Motor neuron (in vitro differentiated cells): ENCODE measurements at regions of chr9 and their contacts with region 1.

Region 1: GRCh38 chr9:130053504-130054324 is at the start of gene GPR107:
- ATAC-seq: peak; percentile 92 to 97 (median 94)
- H3K4me3 ChIP-seq: peak within 1 kb of the TSS; percentile 79 to 95 (median 94)
- H3K27ac ChIP-seq: peak within 1 kb of the TSS; percentile 98 to 99
- H3K4me1 ChIP-seq: peaks cover 17 to 26% of the 10 kb centered on the region in 2 donors
- total RNA-seq, gene GPR107: 27.6 to 58.5 (median 39.7) TPM

Region 2: GRCh38 chr9:129884220-129885017 is 169.3 kb before region 1 on chr9:
- in situ Hi-C with region 1: loop called in 1 of 9 experiments (anchors 25 kb)
- ATAC-seq: peak; percentile 61 to 87 (median 84)
- H3K4me3 ChIP-seq: peak overlapping the region in 2 of 5 donors; percentile 5 to 7
- H3K27ac ChIP-seq: peak overlapping the region in 1 of 2 donors; percentile 24
- H3K4me1 ChIP-seq: peaks cover 20 to 24% of the 10 kb centered on the region in 2 donors

Region 3: DNA sequence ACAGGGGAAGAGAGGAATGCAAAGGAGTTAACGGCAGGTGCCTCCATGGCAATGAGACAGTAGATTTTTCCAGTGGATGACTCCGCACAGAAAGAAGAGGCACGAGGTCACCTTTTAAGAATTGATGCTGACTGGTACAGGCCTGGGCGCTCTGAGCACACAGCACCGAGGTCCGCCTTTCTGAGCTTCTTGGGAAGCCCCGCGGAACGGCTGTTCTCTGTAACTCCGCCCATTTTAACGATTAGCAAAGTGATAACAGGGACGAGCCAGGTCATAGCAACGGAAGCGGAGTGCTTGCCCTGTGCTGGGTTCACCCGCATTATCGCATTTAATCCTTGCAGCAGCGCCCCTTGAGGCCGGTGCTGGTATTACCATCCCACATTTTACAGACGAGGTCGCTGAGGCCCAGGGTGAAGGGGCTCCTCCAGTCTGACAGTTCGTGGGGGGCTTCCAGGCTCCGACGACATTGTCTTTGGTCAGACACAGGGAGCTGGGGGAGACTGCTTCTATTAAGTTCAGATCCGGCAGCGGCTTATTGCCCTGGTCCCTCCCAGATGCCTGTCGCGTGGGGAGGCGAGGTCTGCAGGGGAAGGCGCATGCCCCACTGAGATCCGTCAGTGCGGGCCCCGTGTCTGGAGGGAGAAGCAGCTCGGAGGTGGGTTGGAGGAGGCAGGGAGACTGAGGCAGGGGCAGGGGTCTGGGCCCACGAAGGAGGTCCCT is 189.5 kb after region 1 on chr9:
- in situ Hi-C with region 1: no loop called
- ATAC-seq: peak; percentile 41 to 77 (median 72)
- H3K4me3 ChIP-seq: no peak overlapping the region
- H3K27ac ChIP-seq: no peak overlapping the region
- H3K4me1 ChIP-seq: peaks cover 23% of the 10 kb centered on the region in 2 donors